Calu3 (cell line): ENCODE measurements at regions of chr15 and their contacts with region 1.

Region 1: DNA sequence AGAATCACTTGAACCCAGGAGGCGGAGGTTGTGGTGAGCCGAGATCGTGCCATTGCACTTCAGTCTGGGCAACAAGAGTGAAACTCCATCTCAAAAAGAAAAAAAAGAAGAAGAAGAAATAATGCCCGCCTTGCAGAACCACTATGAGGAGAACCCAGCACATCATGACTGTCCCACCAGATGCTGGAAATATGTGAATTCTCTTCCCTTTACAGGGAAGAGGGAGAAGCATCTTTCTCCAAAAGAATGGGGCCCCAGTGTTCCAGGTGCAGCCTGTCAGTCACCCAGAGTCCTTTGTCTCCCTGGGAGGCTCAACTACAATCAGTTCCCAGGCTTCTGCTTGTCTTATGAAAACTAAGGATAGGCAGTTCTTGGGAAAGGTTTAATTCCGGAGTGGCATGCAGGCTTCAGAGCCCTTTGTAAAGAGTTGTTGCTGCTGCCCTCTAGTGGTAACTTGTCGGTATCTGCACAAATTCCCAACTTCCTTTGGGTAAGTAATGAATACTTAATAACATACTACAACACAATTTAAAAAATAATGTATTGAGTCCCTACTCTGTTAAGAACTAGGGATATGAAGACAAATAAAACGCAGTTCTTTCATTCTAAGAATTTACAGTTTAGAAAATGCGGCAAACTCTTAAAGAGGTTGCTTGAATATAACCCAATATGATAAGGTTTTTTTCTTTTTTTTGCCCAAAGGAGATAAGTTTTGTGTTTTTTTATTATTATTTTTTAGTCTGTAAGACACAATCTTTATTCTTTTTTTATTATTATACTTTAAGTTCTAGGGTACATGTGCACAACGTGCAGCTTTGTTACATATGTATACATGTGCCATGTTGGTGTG is 18.6 kb upstream of the TICRR start:
- DNase-seq: peak; percentile 74
- H3K4me3 Mint-ChIP-seq: no peak overlapping the region
- H3K27ac Mint-ChIP-seq: no peak overlapping the region
- H3K4me1 Mint-ChIP-seq: peaks cover 4% of the 10 kb centered on the region
- H3K27me3 Mint-ChIP-seq: peaks cover 10% of the 10 kb centered on the region
- CTCF ChIP-seq: peak; percentile 61

Region 2: DNA sequence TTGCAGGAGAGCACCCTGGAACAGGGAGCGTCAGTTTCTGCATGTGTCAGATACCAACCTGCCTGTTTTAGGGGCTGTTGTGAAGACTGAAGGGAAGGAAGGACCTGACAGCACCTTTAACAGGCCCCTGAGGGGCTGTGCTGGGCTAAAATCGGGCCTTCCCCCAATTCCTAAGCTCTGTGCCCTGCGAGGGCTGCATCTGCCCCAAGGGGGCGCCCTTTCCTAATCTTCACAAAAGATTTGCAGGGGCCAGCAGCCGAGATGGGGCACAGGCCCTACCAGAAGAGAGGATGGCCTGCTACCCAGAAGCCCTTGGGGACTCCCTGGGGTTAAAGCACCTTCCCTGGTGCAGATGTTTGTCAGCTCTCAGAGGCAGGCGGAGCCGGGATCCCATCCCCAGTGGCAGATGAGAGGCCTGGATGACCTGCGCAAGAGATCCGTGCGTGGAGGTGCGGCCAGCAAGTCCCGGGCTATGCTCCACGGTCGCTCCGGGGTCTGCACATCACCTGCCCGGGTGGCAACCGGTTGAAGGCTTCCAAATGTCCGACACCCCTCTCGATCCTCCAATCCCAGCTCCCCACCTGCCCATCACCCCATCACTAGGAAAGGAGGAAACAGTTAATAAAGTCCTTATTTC is 113.8 kb before region 1 on chr15:
- CTCF ChIA-PET with region 1: no interaction called
- intact Hi-C with region 1: loop called (anchors 2 kb)
- DNase-seq: peak; percentile 74
- H3K4me3 Mint-ChIP-seq: no peak overlapping the region
- H3K27ac Mint-ChIP-seq: no peak overlapping the region
- H3K4me1 Mint-ChIP-seq: no peaks in the 10 kb centered on the region
- H3K27me3 Mint-ChIP-seq: peaks cover 87% of the 10 kb centered on the region
- CTCF ChIP-seq: peak; percentile 53